Heart right ventricle (tissue), 16 donors: ENCODE measurements at regions of chr18 and their contacts with region 1.

Region 1: DNA sequence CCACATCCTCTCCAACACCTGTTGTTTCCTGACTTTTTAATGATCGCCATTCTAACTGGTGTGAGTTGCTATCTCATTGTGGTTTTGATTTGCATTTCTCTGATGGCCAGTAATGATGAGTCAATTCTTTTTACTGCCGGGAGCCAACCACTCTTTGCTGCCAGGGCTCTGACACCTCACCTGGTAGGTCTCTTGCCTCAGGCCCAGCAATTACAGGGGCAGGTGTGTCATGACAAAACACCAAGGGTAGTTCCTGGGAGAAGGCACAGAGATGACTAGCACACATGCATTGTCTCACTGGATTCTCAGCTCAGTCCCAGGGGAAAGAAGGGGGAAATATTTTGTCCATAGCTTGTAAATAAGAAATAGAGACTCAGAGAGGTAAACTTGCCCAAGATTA is 122.3 kb downstream of the CHST9 start:
- DNase-seq: no peak
- ATAC-seq: no peak
- H3K4me3 ChIP-seq: no peak overlapping the region
- H3K27ac ChIP-seq: no peak overlapping the region
- H3K4me1 ChIP-seq: peaks cover 0 to 15% (median 5%) of the 10 kb centered on the region in 9 donors
- H3K27me3 ChIP-seq: no peaks in the 10 kb centered on the region
- CTCF ChIP-seq: no peak

Region 2: GRCh38 chr18:27136208-27136535 is 73.4 kb after region 1 on chr18:
- intact Hi-C with region 1: loop called in 4 of 10 experiments (anchors 5 to 10 kb)
- DNase-seq: no peak
- ATAC-seq: peak in 1 of 8 donors; percentile 27
- H3K4me3 ChIP-seq: no peak overlapping the region
- H3K27ac ChIP-seq: no peak overlapping the region
- H3K4me1 ChIP-seq: peaks cover 0 to 12% (median 0%) of the 10 kb centered on the region in 9 donors
- H3K27me3 ChIP-seq: no peaks in the 10 kb centered on the region
- CTCF ChIP-seq: no peak